Activated CD8-positive, alpha-beta T cell treated with anti-CD3 and anti-CD28 coated beads for 36 hours (primary cell): ENCODE measurements at regions of chr3 and their contacts with region 1.

Region 1: GRCh38 chr3:158790901-158791589 is 10.8 kb upstream of the MFSD1 start:
- DNase-seq: peak; percentile 47
- ATAC-seq: peak; percentile 90
- H3K4me3 Mint-ChIP-seq: peak overlapping the region; percentile 70
- H3K27ac Mint-ChIP-seq: peak overlapping the region; percentile 63
- H3K4me1 Mint-ChIP-seq: peaks cover 3% of the 10 kb centered on the region
- H3K27me3 Mint-ChIP-seq: no peaks in the 10 kb centered on the region
- CTCF ChIP-seq: peak; percentile 86

Region 2: GRCh38 chr3:158801696-158802408 is 10.8 kb after region 1 on chr3 and contains the start of gene MFSD1:
- CTCF ChIA-PET with region 1: interaction called, 24 read pairs
- POLR2A ChIA-PET with region 1: interaction called, 4 read pairs
- intact Hi-C with region 1: no loop called
- DNase-seq: peak; percentile 94
- ATAC-seq: peak; percentile 94
- H3K4me3 Mint-ChIP-seq: peak within 1 kb of the TSS; percentile 83
- H3K27ac Mint-ChIP-seq: peak within 1 kb of the TSS; percentile 66
- H3K4me1 Mint-ChIP-seq: peaks cover 20% of the 10 kb centered on the region
- H3K27me3 Mint-ChIP-seq: no peaks in the 10 kb centered on the region
- CTCF ChIP-seq: no peak
- total RNA-seq, gene MFSD1: 9.2 to 9.7 TPM